ENCODE measurements at regions of chr7 and their contacts with region 1.

Region 1: DNA sequence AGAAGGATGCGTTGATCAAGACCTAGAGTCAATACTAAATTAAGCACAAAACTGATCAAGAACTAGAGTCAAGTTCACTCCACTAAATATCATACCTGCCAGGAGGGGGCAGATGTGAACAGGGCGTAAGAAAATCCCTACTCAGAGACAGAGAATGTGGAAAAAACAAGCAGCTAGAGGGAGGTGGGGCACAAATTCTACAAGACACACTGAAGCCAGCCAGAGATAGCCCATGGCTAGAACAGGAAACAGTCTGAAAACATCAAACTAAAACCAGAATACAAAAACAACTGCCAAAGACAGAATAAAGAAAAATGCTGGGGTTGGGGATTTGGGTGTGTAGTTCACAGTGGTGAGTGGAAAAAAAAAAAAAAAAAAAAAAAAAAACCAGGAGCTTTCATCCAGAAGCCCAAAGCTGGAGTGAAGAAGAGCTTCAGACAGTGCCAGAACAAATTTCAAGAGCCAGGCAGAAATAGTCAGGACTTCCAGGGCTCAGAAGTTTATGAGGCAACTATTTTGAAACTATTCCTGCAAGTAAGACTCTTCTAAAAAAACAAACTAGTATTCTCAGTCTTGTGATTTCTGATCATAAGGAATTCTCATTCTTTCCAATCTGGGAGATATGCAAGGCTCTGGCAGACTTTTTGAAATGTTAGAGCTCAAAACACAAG is 118.3 kb downstream of the CCDC71L start:
- DNase-seq: peak; percentile 29 to 61 (median 37)
- H3K4me3 ChIP-seq: no peak overlapping the region
- H3K4me3 Mint-ChIP-seq: peak overlapping the region in 1 of 8 donors; percentile 2
- H3K27ac ChIP-seq: no peak overlapping the region
- H3K27ac Mint-ChIP-seq: peak overlapping the region in 5 of 7 donors; percentile 5 to 74 (median 13)
- H3K4me1 ChIP-seq: peaks cover 6% of the 10 kb centered on the region
- H3K4me1 Mint-ChIP-seq: peaks cover 9 to 16% (median 12%) of the 10 kb centered on the region in 4 donors
- H3K27me3 ChIP-seq: no peaks in the 10 kb centered on the region
- H3K27me3 Mint-ChIP-seq: no peaks in the 10 kb centered on the region

Region 2: DNA sequence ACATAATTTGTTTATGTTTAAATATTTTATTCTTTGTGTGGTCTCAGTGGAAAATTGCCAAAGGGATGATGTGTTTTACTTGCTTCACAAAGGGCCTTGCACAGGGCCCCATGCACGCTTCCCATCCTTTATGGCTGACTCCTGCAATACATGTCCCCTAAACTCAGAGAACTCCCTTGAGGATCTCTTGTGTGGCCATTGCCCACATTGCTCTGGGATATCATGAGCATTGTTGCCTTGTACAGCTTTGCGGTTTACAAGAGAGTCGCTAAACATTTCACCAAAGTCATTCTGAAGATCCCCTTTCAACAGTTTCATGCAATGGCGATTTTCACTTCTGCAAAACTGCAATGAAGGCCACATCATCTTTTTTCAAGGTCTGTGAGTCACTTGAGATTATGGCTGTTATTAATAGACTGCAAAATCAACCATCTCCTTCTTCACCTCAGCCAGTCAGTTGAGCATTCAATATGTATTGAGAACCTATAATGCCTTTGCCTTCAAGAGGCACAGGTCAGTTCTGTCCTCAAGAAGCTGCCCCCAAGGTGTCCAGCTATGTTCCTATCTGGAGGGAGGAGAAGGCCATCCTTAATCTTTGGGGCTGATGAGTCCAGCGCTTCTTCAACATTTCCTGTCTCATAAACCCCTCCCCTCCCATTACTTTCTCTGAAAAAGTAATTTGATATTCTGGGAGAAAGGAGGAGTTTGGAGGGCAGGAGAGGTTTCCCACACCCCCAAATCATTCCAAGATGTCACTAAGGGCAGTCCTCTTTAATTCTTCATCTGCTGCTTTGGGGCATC is 10.2 kb after region 1 on chr7:
- CTCF ChIA-PET with region 1: interaction called, 10 read pairs
- POLR2A ChIA-PET with region 1: interaction called, 3 read pairs
- intact Hi-C with region 1: no loop called
- DNase-seq: no peak
- H3K4me3 ChIP-seq: no peak overlapping the region
- H3K4me3 Mint-ChIP-seq: no peak overlapping the region
- H3K27ac ChIP-seq: no peak overlapping the region
- H3K27ac Mint-ChIP-seq: no peak overlapping the region
- H3K4me1 ChIP-seq: no peaks in the 10 kb centered on the region
- H3K4me1 Mint-ChIP-seq: no peaks in the 10 kb centered on the region
- H3K27me3 ChIP-seq: no peaks in the 10 kb centered on the region
- H3K27me3 Mint-ChIP-seq: peaks cover 0 to 5% of the 10 kb centered on the region in 2 donors

Region 3: GRCh38 chr7:106731187-106731586 is 188.5 kb after region 1 on chr7:
- CTCF ChIA-PET with region 1: interaction called, 55 read pairs
- POLR2A ChIA-PET with region 1: no interaction called
- intact Hi-C with region 1: loop called (anchors 1 kb)
- DNase-seq: no peak
- H3K4me3 ChIP-seq: no peak overlapping the region
- H3K4me3 Mint-ChIP-seq: peak overlapping the region in 1 of 8 donors; percentile 10
- H3K27ac ChIP-seq: no peak overlapping the region
- H3K27ac Mint-ChIP-seq: no peak overlapping the region
- H3K4me1 ChIP-seq: peaks cover 7% of the 10 kb centered on the region
- H3K4me1 Mint-ChIP-seq: peaks cover 5 to 25% (median 18%) of the 10 kb centered on the region in 4 donors
- H3K27me3 ChIP-seq: no peaks in the 10 kb centered on the region
- H3K27me3 Mint-ChIP-seq: no peaks in the 10 kb centered on the region

Measured in CD4-positive, alpha-beta memory T cell (primary cell).